ENCODE measurements at regions of chr20 and their contacts with region 1.

Region 1: DNA sequence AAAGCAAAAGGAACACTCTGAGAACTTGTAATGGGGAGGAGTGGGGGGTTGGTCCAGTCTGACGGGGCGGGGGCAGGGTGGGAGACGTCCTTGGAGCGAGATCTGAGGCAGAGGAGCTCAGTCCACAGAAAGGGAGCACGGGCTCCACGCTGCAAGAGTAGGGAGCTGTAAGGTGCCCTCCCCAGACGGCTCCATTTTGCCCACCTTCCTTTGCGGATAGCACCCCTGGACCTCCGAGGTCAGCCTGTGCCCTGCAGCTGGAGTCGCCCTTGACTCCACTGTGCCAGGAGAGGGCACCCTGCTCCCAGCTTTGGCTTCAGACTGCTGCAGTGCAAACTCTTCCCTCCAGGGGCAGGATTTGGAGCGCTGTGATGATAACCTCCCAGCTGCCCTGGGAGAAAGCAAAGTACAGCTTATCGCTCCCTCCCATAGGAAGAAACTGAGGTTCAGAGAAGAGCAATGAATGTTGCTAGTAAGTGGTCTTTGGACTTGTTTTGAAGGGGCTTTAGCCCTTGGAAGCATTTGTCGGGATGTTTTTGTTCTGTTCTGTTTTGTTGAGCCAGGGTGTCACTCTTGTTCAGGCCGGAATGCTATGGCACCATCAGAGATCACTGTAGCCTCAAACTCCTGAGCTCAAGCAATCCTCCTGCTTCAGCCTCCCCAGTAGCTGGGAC is 9.5 kb upstream of the AHCY start:
- DNase-seq: peak; percentile 74 to 92 (median 86)
- ATAC-seq: peak; percentile 100
- H3K4me3 ChIP-seq: no peak overlapping the region
- H3K4me3 Mint-ChIP-seq: peak overlapping the region; percentile 39
- H3K27ac ChIP-seq: no peak overlapping the region
- H3K27ac Mint-ChIP-seq: no peak overlapping the region
- H3K4me1 ChIP-seq: peaks cover 9% of the 10 kb centered on the region
- H3K4me1 Mint-ChIP-seq: peaks cover 5% of the 10 kb centered on the region
- H3K27me3 ChIP-seq: peaks cover 9 to 11% of the 10 kb centered on the region in 2 experiments
- H3K27me3 Mint-ChIP-seq: peaks cover 20% of the 10 kb centered on the region
- CTCF ChIP-seq: peak; percentile 99

Region 2: DNA sequence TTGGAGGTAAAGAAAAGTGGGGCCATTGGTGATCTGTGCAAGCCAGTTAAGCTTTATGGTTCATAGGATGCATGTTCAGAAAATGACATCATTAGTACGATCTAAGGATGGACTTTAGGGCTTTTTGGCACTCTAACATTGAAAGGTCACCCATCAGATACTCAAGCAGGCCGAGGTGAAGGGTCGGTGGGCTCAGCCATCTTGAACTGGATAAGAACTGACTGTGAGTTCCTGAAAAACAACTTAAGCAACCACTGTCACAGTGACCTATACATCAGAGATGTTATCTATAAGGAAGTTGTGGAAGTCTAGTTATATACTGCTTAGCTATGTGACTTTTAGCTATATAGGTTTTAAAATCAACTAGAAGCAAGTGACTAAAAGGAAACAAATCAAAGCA is 37.4 kb after region 1 on chr20:
- CTCF ChIA-PET with region 1: interaction called, 10 read pairs
- POLR2A ChIA-PET with region 1: no interaction called
- intact Hi-C with region 1: no loop called
- DNase-seq: peak in 1 of 9 experiments; percentile 20
- ATAC-seq: peak; percentile 55
- H3K4me3 ChIP-seq: no peak overlapping the region
- H3K4me3 Mint-ChIP-seq: no peak overlapping the region
- H3K27ac ChIP-seq: no peak overlapping the region
- H3K27ac Mint-ChIP-seq: no peak overlapping the region
- H3K4me1 ChIP-seq: no peaks in the 10 kb centered on the region
- H3K4me1 Mint-ChIP-seq: peaks cover 3% of the 10 kb centered on the region
- H3K27me3 ChIP-seq: no peaks in the 10 kb centered on the region
- H3K27me3 Mint-ChIP-seq: no peaks in the 10 kb centered on the region
- CTCF ChIP-seq: no peak

Region 3: GRCh38 chr20:34404803-34405202 is 92.1 kb after region 1 on chr20:
- CTCF ChIA-PET with region 1: interaction called, 12 read pairs
- POLR2A ChIA-PET with region 1: no interaction called
- intact Hi-C with region 1: loop called in 1 of 2 experiments (anchors 5 kb)
- DNase-seq: no peak
- ATAC-seq: no peak
- H3K4me3 ChIP-seq: no peak overlapping the region
- H3K4me3 Mint-ChIP-seq: no peak overlapping the region
- H3K27ac ChIP-seq: peak overlapping the region in 1 of 2 experiments; percentile 46
- H3K27ac Mint-ChIP-seq: peak overlapping the region; percentile 80
- H3K4me1 ChIP-seq: peaks cover 27% of the 10 kb centered on the region
- H3K4me1 Mint-ChIP-seq: peaks cover 63% of the 10 kb centered on the region
- H3K27me3 ChIP-seq: no peaks in the 10 kb centered on the region
- H3K27me3 Mint-ChIP-seq: no peaks in the 10 kb centered on the region
- CTCF ChIP-seq: no peak

Region 4: GRCh38 chr20:34473262-34473883 is 160.7 kb after region 1 on chr20:
- CTCF ChIA-PET with region 1: interaction called, 12 read pairs
- POLR2A ChIA-PET with region 1: no interaction called
- intact Hi-C with region 1: loop called (anchors 1 to 5 kb)
- DNase-seq: peak in 5 of 9 experiments; percentile 20 to 51 (median 37)
- ATAC-seq: peak; percentile 57
- H3K4me3 ChIP-seq: no peak overlapping the region
- H3K4me3 Mint-ChIP-seq: no peak overlapping the region
- H3K27ac ChIP-seq: no peak overlapping the region
- H3K27ac Mint-ChIP-seq: no peak overlapping the region
- H3K4me1 ChIP-seq: no peaks in the 10 kb centered on the region
- H3K4me1 Mint-ChIP-seq: peaks cover 8% of the 10 kb centered on the region
- H3K27me3 ChIP-seq: no peaks in the 10 kb centered on the region
- H3K27me3 Mint-ChIP-seq: no peaks in the 10 kb centered on the region
- CTCF ChIP-seq: no peak

Region 5: DNA sequence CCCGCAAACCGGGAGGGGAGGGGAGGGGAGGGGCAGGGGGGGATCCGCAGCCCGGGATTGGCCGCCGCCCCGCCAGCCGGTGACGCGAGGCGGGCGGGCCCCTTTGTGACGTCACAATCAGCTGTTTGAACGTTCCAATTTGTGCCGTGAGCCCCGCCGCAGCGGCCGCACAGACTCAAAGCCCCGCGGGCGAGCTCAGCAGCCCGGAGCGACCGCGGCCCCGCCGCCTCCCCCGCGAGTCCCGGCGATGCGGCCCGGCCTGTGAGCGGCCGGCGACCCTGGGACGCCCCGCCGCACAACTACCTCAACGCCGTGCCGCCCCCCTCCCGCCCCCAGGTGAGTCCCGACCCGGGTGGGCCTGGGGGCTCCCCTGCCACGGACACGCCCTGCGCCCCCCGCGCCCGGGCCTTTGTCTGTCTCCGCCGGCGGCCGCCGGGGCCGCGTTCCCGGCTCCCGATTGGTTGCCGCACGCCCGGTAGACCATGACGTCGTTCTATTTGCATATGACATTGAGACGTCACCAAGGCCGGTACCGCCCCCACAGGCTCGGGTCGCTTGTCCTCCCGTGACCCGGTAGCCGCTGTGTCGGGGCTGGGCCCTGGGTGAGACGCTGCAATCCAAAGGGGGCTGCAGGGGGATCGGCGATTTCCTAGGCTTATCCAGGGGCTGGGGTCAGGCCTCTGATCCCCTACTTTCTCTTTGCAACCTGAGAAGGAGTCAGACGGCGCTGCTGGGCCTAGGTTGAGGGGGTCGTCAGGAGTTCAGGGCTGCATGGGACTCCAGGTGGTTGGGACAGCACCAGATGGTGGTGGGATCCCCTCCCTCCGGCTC is 391.7 kb after region 1 on chr20 and contains the start of gene TP53INP2:
- CTCF ChIA-PET with region 1: interaction called, 12 read pairs
- POLR2A ChIA-PET with region 1: interaction called, 3 read pairs
- intact Hi-C with region 1: loop called (anchors 1 to 2 kb)
- DNase-seq: peak; percentile 71 to 96 (median 87)
- ATAC-seq: peak; percentile 53
- H3K4me3 ChIP-seq: peak within 1 kb of the TSS; percentile 78 to 96
- H3K4me3 Mint-ChIP-seq: peak within 1 kb of the TSS; percentile 93
- H3K27ac ChIP-seq: peak within 1 kb of the TSS; percentile 71 to 96
- H3K27ac Mint-ChIP-seq: peak within 1 kb of the TSS; percentile 95
- H3K4me1 ChIP-seq: peaks cover 14% of the 10 kb centered on the region
- H3K4me1 Mint-ChIP-seq: peaks cover 22% of the 10 kb centered on the region
- H3K27me3 ChIP-seq: peaks cover 0 to 6% of the 10 kb centered on the region in 2 experiments
- H3K27me3 Mint-ChIP-seq: peaks cover 8% of the 10 kb centered on the region
- CTCF ChIP-seq: no peak
- total RNA-seq, gene TP53INP2: 101 to 103 TPM